Ascending aorta (tissue), 2 donors: ENCODE measurements at regions of chr11 and their contacts with region 1.

Region 1: GRCh38 chr11:22829231-22830081 is at the start of gene SVIP:
- DNase-seq: peak; percentile 70 to 96
- H3K4me3 ChIP-seq: peak within 1 kb of the TSS; percentile 68 to 85
- H3K27ac ChIP-seq: peak within 1 kb of the TSS; percentile 76 to 80
- H3K4me1 ChIP-seq: peaks cover 0 to 5% of the 10 kb centered on the region in 2 donors
- H3K27me3 ChIP-seq: no peaks in the 10 kb centered on the region
- CTCF ChIP-seq: peak; percentile 30 to 78 (median 73)
- total RNA-seq, gene SVIP: 6.1 TPM

Region 2: DNA sequence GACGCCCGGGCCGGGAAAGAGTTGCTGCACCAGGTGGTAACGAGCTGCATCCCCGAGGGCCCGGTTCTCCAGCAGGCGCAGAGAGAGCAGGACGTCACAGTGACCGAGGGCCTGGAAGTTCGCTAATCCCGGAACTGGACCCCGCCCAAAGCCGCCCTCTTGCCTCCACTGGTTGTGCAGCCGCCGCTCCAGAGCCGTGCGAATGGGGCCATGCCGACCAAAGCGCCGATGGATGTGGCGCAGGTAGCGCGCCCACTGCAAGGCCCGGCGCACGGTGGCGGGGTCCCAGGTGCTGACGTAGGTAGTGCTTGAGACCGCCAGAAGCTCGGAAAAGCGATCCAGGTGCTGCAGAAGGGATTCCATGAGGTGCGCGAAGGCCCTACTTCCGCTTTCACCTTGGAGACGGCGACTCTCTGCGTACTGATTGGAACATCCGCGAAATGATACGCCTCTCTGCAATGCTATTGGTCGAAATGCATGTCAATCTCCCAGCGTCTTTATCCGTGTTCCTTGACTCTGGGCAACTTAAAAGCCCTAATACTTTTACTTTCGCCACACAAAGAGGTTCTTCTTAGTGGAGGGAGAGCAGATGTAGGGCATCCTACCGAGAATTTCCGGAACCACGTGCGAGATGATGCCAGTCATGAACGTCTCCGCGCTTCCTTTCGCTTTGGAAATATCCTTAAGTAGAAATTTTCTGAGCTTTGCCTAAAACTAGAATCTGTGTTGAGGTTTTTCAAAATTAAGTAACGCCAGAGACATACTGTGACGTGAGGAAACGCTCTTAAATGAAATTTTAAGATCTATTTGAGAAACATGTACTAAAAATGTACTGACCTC is 203.8 kb before region 1 on chr11 and contains the start of gene FANCF:
- intact Hi-C with region 1: loop called (anchors 5 kb)
- DNase-seq: peak; percentile 83 to 97
- H3K4me3 ChIP-seq: peak within 1 kb of the TSS; percentile 94 to 95
- H3K27ac ChIP-seq: peak within 1 kb of the TSS; percentile 80 to 85
- H3K4me1 ChIP-seq: peaks cover 3 to 8% of the 10 kb centered on the region in 2 donors
- H3K27me3 ChIP-seq: no peaks in the 10 kb centered on the region
- CTCF ChIP-seq: no peak
- total RNA-seq, gene FANCF: 0.32 TPM

Region 3: GRCh38 chr11:22787551-22788162 is 41.8 kb before region 1 on chr11:
- intact Hi-C with region 1: no loop called
- DNase-seq: no peak
- H3K4me3 ChIP-seq: no peak overlapping the region
- H3K27ac ChIP-seq: no peak overlapping the region
- H3K4me1 ChIP-seq: no peaks in the 10 kb centered on the region
- H3K27me3 ChIP-seq: no peaks in the 10 kb centered on the region
- CTCF ChIP-seq: peak; percentile 10 to 59 (median 52)